ENCODE measurements at regions of chr5 and their contacts with region 1.

Region 1: GRCh38 chr5:150846654-150847333 is 473 bp downstream of the IRGM start:
- DNase-seq: peak; percentile 86
- H3K27ac ChIP-seq: no peak overlapping the region
- CTCF ChIP-seq: peak; percentile 87

Region 2: GRCh38 chr5:150801117-150801927 is 45.5 kb before region 1 on chr5:
- CTCF ChIA-PET with region 1: interaction called, 26 read pairs
- POLR2A ChIA-PET with region 1: no interaction called
- DNase-seq: peak; percentile 76
- H3K27ac ChIP-seq: no peak overlapping the region
- CTCF ChIP-seq: peak; percentile 75